ENCODE measurements at regions of chr2 and their contacts with region 1.

Region 1: DNA sequence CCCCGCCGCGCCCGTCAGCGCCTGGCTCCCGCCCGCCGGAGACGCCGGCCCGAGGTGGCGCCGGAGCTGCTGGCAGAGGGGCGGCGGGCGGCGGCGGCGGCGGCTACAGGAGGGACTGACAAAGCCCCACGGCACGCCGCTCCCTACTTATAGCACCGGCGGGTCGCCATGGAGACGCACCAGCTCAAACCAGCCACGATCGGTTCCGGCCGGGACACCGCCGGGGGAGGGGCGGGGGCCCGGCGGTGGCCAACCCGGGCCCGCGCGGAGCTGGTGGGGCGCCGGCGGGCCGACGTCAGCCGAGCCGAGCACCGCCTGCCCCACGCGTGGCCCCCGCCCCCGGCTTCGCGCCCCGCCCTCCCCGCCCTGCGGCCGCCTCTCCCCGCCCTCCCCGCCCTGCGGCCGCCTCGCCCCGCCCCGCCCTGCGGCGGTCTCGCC is at the start of gene ODC1:
- DNase-seq: peak; percentile 90
- H3K4me3 Mint-ChIP-seq: peak within 1 kb of the TSS; percentile 100
- H3K27ac Mint-ChIP-seq: peak within 1 kb of the TSS; percentile 98
- H3K4me1 Mint-ChIP-seq: peaks cover 45% of the 10 kb centered on the region
- H3K27me3 Mint-ChIP-seq: peaks cover 1% of the 10 kb centered on the region
- total RNA-seq, gene ODC1: 235 and 247 TPM in 2 replicates

Region 2: GRCh38 chr2:9594366-9595054 is 853.7 kb before region 1 on chr2:
- intact Hi-C with region 1: loop called (anchors 10 kb)
- DNase-seq: no peak
- H3K4me3 Mint-ChIP-seq: peak overlapping the region; percentile 28
- H3K27ac Mint-ChIP-seq: peak overlapping the region; percentile 85
- H3K4me1 Mint-ChIP-seq: peaks cover 71% of the 10 kb centered on the region
- H3K27me3 Mint-ChIP-seq: no peaks in the 10 kb centered on the region

Region 3: GRCh38 chr2:10122386-10123280 is 325.6 kb before region 1 on chr2 and contains the start of gene RRM2:
- intact Hi-C with region 1: loop called (anchors 1 kb)
- DNase-seq: peak; percentile 92
- H3K4me3 Mint-ChIP-seq: peak within 1 kb of the TSS; percentile 99
- H3K27ac Mint-ChIP-seq: peak within 1 kb of the TSS; percentile 100
- H3K4me1 Mint-ChIP-seq: peaks cover 64% of the 10 kb centered on the region
- H3K27me3 Mint-ChIP-seq: no peaks in the 10 kb centered on the region
- total RNA-seq, gene RRM2: 328 and 351 TPM in 2 replicates

Region 4: DNA sequence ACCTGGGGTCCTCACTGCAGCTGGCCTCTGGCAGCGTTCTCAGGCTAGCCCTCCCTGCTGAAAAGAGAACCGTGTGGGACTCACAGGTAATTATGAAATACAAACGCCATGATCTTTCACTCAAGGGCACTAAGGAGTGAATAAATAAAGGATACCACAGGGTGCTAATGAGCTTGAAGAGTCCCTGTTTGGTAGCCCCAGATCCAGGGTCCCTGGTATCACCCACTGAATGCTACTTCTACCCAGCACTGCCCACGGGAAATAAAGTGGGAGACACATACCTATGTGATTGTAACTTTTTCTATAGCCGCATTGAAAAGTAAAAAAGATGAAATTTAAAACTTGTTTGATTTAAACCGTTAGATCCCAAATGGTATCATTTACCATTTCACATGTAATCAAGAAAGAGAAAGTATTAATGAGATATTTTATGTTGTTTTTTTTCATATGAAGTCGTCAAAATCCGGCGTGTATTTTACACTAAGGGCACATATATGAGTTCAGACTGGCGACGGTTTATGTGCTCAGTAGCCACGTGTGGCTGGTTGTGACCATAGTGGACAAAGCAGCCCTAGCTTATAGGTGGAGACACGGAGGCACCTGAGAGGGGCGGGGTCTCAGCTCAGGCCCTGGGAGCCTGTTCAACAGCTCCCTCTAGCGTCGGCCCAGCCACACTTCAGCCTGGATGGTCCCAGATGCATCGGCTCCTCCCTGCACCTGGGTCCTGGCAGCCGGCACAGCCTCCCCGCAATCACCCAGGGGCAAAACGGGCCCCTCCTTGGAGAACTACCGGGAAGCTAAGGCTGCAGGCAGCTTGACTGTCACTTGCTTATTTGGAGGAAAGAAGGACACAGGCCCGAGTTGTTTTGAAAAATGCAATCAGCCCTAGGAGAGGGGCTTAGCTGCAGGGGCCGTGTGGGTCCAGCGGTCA is 39.3 kb before region 1 on chr2:
- intact Hi-C with region 1: loop called (anchors 1 kb)
- DNase-seq: peak; percentile 76
- H3K4me3 Mint-ChIP-seq: peak overlapping the region; percentile 80
- H3K27ac Mint-ChIP-seq: peak overlapping the region; percentile 93
- H3K4me1 Mint-ChIP-seq: peaks cover 54% of the 10 kb centered on the region
- H3K27me3 Mint-ChIP-seq: no peaks in the 10 kb centered on the region

Region 5: GRCh38 chr2:10477443-10478297 is 29.4 kb after region 1 on chr2:
- intact Hi-C with region 1: no loop called
- DNase-seq: no peak
- H3K4me3 Mint-ChIP-seq: no peak overlapping the region
- H3K27ac Mint-ChIP-seq: no peak overlapping the region
- H3K4me1 Mint-ChIP-seq: peaks cover 12% of the 10 kb centered on the region
- H3K27me3 Mint-ChIP-seq: peaks cover 9% of the 10 kb centered on the region

Region 6: DNA sequence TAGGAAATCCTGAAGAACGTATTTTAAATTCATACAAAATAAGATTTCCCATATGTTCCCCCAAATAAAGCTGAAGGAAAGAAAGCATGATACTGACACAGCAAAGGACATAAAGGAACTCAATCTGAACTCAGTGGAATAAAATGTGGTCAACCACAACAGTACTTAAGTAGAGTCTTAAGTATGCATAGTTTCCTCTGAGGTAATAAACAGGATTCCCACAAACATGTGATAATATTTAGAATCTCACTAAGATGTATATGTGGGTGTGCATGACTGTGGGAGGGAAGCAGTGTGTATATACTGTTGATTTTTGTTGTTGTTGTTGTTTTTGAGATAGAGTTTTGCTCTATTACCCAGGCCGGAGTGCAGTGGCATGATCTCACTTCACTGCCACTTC is 172.3 kb after region 1 on chr2:
- intact Hi-C with region 1: loop called (anchors 1 kb)
- DNase-seq: no peak
- H3K4me3 Mint-ChIP-seq: peak overlapping the region; percentile 37
- H3K27ac Mint-ChIP-seq: peak overlapping the region; percentile 68
- H3K4me1 Mint-ChIP-seq: peaks cover 75% of the 10 kb centered on the region
- H3K27me3 Mint-ChIP-seq: no peaks in the 10 kb centered on the region